ENCODE measurements at regions of chr15 and their contacts with region 1.

Region 1: DNA sequence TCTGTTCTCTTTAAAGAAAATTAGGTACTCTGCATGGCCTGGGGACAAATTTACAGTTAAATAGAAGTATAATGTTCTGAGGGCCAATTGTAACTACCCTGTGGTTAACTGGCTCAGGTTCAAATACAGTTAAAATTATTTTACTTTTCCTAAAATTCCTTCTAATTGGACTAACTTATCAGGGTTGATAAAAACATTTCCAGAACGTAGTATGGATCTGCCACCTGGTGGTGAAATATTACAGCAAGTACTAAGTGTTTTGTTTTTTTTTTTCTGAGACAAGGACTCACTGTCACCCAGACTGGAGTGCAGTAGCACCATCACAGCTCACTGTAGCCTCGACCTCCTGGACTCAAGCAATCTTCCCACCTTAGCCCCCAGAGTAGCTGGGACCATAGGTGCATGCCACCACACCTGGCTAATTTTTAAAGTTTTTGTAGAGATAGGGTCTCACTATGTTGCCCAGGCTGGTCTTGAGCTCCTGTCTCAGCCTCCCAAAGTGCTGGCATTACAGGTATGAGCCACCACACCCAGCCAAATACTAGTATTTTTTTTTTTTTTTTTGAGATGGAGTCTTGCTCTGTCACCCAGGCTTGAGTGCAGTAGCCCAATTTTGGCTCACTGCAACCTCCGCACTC is 29.2 kb downstream of the NEO1 start:
- DNase-seq: peak; percentile 26
- H3K4me3 ChIP-seq: no peak overlapping the region
- H3K27ac ChIP-seq: no peak overlapping the region
- H3K27me3 ChIP-seq: peaks cover 2% of the 10 kb centered on the region
- CTCF ChIP-seq: peak; percentile 70

Region 2: DNA sequence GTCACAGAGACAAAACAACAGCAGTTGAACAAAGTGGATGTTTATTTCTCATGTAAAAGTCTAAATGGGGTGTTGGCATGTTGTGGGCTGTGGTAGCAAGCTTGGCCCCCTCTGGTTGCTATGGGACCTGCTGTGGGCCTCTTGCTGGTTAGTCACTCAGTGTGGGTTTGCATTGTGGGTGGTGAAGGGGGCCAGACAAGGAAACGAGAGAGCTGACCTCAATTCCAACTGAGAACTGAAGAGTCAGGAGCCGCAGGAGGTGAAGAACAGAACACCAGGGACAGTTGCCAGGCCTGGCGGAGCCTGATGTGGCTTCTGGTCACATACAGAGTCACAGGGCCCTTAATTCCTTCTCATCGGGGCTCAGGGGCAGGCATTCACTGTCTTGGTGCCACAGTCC is 296.0 kb before region 1 on chr15:
- CTCF ChIA-PET with region 1: interaction called, 10 read pairs
- POLR2A ChIA-PET with region 1: no interaction called
- DNase-seq: peak; percentile 15
- H3K4me3 ChIP-seq: no peak overlapping the region
- H3K27ac ChIP-seq: peak overlapping the region; percentile 39
- H3K27me3 ChIP-seq: no peaks in the 10 kb centered on the region
- CTCF ChIP-seq: no peak

Region 3: GRCh38 chr15:72796515-72797337 is 284.7 kb before region 1 on chr15:
- CTCF ChIA-PET with region 1: interaction called, 13 read pairs
- POLR2A ChIA-PET with region 1: no interaction called
- DNase-seq: no peak
- H3K4me3 ChIP-seq: peak overlapping the region; percentile 55
- H3K27ac ChIP-seq: no peak overlapping the region
- H3K27me3 ChIP-seq: no peaks in the 10 kb centered on the region
- CTCF ChIP-seq: peak; percentile 29; the same call in 1 of the 2 replicates

Region 4: DNA sequence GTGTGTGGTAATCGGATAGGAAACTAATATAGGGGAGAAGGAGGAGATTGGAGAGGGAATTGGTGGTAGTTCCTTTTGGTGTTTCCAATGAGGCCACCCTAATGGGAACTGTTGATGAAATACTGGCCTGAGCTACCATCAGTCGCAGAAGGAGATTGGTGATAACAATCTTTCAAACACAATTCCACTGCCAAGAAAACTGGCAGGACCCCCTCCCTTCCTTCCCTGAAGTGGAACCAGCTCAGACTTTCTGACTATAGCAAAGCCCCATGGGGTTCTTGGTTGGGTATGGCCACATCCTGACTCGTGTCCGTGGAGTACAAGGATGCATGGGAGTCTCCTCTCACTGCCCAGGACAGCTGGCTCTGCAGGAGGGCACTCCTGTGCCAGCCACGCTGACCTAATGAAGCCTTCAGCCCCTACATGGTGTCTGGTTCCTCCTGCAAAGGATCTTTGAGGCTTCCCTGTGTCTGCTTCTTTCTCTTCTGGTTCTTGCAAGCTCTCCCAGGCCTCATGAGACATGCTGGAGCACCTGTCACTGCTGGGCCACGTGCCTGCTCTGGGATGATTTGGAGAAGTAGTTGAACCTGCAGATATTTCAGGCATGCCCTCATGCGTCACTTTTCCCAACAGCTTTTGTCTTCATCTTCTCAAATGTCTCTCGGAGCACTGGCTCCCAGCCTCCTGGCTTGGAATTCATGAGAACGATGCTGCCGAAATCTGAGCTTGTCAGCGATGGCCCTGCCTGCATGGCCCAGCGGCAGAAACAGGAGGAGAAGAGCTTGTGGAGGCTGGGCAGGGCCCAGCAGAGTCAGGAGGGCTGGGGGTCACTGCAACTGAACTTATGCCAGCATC is 207.8 kb before region 1 on chr15:
- CTCF ChIA-PET with region 1: no interaction called
- POLR2A ChIA-PET with region 1: no interaction called
- DNase-seq: no peak
- H3K4me3 ChIP-seq: no peak overlapping the region
- H3K27ac ChIP-seq: no peak overlapping the region
- H3K27me3 ChIP-seq: peaks cover 4% of the 10 kb centered on the region
- CTCF ChIP-seq: no peak

Region 5: GRCh38 chr15:73051811-73052678 is 29.4 kb before region 1 on chr15 and contains the start of gene NEO1:
- CTCF ChIA-PET with region 1: no interaction called
- POLR2A ChIA-PET with region 1: no interaction called
- DNase-seq: no peak
- H3K4me3 ChIP-seq: peak within 1 kb of the TSS; percentile 72
- H3K27ac ChIP-seq: peak within 1 kb of the TSS; percentile 11
- H3K27me3 ChIP-seq: peaks cover 41% of the 10 kb centered on the region
- CTCF ChIP-seq: no peak
- polyA plus RNA-seq, gene NEO1: 3.5 and 3.9 TPM in 2 replicates

Region 6: GRCh38 chr15:73108676-73109075 is 27.2 kb after region 1 on chr15:
- CTCF ChIA-PET with region 1: no interaction called
- POLR2A ChIA-PET with region 1: no interaction called
- DNase-seq: no peak
- H3K4me3 ChIP-seq: no peak overlapping the region
- H3K27ac ChIP-seq: no peak overlapping the region
- H3K27me3 ChIP-seq: no peaks in the 10 kb centered on the region
- CTCF ChIP-seq: no peak

Measured in AG04450 (cell line).